H1 (cell line): ENCODE measurements at regions of chrX and their contacts with region 1.

Region 1: GRCh38 chrX:16112428-16112827 is 10.9 kb upstream of the GRPR start:
- DNase-seq: no peak
- H3K4me3 ChIP-seq: no peak overlapping the region
- H3K27ac ChIP-seq: no peak overlapping the region
- H3K4me1 ChIP-seq: no peaks in the 10 kb centered on the region
- H3K27me3 ChIP-seq: no peaks in the 10 kb centered on the region
- CTCF ChIP-seq: peak in 1 of 3 experiments; percentile 19; a peak in 1 of 4 replicates
- EP300 ChIP-seq: no peak
- POLR2A ChIP-seq: no peak
- RAD21 ChIP-seq: peak in 1 of 2 experiments; percentile 42; a peak in 2 of 4 replicates

Region 2: GRCh38 chrX:16096141-16096540 is 16.3 kb before region 1 on chrX:
- CTCF ChIA-PET with region 1: no interaction called
- POLR2A ChIA-PET with region 1: no interaction called
- DNase-seq: no peak
- H3K4me3 ChIP-seq: no peak overlapping the region
- H3K27ac ChIP-seq: no peak overlapping the region
- H3K4me1 ChIP-seq: 0 out of 7 replicates have a peak, but pooled peaks cover 0 to 2% (median 0%) of the 10 kb centered on the region in 4 experiments
- H3K27me3 ChIP-seq: no peaks in the 10 kb centered on the region
- CTCF ChIP-seq: no peak
- EP300 ChIP-seq: no peak
- POLR2A ChIP-seq: no peak
- RAD21 ChIP-seq: no peak

Region 3: DNA sequence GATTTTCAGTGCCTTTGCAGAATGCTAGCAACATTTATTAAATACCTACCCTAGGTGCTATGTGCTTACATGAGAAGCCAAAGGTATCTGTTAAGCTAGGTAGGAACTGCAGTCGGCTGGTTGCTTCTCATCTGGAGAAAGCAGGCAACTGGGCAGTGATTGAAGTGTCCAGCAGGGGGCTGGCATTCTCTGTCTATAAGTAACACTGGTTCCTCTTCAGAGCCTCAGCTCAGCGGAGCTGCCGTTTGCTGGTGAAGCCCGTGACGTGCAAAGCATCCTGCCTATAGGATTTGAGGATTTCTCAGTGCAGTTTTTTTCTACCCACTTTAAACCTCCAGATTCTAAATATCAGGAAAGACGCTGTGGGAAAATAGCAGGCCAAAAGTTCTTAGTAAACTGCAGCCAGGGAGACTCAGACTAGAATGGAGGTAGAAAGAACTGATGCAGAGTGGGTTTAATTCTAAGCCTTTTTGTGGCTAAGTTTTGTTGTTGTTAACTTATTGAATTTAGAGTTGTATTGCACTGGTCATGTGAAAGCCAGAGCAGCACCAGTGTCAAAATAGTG is 10.9 kb after region 1 on chrX and contains the start of gene GRPR:
- CTCF ChIA-PET with region 1: interaction called, 12 read pairs
- POLR2A ChIA-PET with region 1: no interaction called
- DNase-seq: peak; percentile 70 to 72
- H3K4me3 ChIP-seq: peak within 1 kb of the TSS; percentile 54 to 99 (median 66)
- H3K27ac ChIP-seq: no peak within 1 kb of the TSS; the same call in 1 of the 2 replicates
- H3K4me1 ChIP-seq: peaks cover 0 to 6% (median 0%) of the 10 kb centered on the region in 4 experiments; a peak in 3 of 7 replicates
- H3K27me3 ChIP-seq: no peaks in the 10 kb centered on the region
- CTCF ChIP-seq: peak; percentile 49 to 75 (median 66)
- EP300 ChIP-seq: no peak
- POLR2A ChIP-seq: no peak
- RAD21 ChIP-seq: peak; percentile 72 to 80
- total RNA-seq, gene GRPR: 18.5 and 18.6 TPM in 2 replicates